ENCODE measurements at regions of chr12 and their contacts with region 1.

Region 1: DNA sequence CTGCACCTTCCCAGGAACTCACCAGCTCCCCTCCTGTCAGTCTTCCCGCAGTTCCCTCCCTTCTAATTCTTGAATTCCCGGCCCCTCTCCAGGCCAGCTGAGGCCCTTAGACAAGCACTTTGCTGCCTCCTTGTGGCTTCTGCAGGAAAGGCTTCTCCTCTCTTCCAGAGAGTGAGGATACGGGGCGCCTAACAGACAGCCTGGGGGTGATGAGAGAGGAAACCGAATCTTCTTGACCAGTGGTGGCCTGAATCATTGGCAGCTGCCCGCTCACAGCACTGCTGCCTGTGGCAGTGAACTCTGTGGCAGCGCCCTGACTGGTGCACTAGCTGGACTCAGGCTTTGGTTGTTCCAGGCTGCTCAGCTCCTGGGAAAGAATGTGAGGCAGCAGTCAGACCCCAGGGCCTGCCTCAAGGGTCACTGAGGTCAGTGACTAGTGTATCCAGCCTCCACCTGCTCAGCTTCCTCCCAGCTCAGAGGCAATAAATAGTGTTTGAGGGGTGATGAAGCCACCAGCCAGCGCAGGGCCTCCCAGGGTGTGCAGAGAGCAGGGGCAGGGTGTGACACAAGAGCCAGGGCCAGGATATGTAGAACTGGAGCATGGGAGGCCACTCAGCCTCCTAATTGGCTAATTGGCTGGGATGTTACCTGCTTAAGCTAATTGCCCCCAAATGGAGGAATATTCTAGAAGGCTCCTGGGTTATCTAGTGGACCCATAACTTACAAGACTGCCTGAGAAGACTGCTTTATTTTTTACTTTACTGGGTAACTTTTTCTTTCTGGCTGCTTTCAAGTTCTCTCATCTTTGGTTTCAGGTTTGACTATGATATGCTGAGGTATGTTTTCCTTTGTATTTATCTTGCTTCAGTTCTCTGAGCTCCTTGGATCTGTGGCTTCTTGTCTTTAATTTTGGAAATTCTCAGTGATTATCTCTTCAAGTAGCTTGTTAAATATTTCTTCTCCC is 12.9 kb upstream of the MCRS1 start:
- DNase-seq: peak; percentile 93
- H3K4me3 ChIP-seq: no peak overlapping the region
- H3K4me3 Mint-ChIP-seq: peak overlapping the region; percentile 19
- H3K27ac Mint-ChIP-seq: peak overlapping the region; percentile 21
- H3K4me1 ChIP-seq: peaks cover 30% of the 10 kb centered on the region
- H3K4me1 Mint-ChIP-seq: peaks cover 26% of the 10 kb centered on the region
- H3K27me3 ChIP-seq: no peaks in the 10 kb centered on the region
- H3K27me3 Mint-ChIP-seq: no peaks in the 10 kb centered on the region
- CTCF ChIP-seq: peak; percentile 90 to 97

Region 2: DNA sequence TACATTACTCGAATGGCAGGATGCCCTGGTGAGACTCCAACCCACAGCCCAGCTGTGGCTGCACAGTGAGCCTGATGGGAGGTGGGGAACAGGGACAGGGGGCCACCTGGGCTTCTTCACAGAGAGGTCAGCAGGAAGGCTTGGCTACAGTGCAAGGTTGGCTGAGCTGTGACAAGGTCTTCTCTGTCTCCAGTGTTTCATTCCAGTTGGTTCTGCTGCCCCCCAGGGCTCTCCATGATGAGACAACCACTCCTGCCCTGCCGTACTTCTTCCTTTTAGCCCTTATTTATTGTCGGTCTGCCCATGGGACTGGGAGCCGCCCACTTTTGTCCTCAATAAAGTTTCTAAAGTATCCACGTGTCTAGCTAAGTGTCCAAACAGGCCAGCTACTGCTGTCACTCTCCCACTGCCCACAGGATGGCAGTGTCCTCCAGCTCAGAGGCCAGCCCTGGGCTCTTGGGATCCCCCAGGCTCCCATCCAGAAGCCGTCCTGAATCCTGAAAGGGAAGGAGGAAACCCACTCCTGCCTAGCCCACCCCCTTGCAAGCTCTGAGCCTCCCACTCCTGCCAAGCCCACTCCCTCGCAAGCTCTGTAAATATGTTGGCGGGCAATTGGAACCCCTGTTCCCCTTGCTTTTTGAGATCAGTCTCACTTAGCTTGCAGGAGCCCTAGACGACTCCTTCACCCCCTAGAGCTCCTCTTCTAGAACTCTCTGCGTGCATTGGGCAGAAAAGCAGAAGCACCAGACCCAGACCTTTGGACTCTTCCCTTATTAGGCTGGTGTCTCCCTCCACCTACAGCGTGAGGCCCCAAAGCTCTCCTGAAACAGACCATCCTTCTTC is 249.3 kb before region 1 on chr12:
- CTCF ChIA-PET with region 1: interaction called, 20 read pairs
- POLR2A ChIA-PET with region 1: no interaction called
- intact Hi-C with region 1: no loop called
- DNase-seq: peak; percentile 84 to 86
- H3K4me3 ChIP-seq: no peak overlapping the region
- H3K4me3 Mint-ChIP-seq: peak overlapping the region; percentile 18
- H3K27ac Mint-ChIP-seq: peak overlapping the region; percentile 77
- H3K4me1 ChIP-seq: peaks cover 24% of the 10 kb centered on the region
- H3K4me1 Mint-ChIP-seq: peaks cover 24% of the 10 kb centered on the region
- H3K27me3 ChIP-seq: no peaks in the 10 kb centered on the region
- H3K27me3 Mint-ChIP-seq: no peaks in the 10 kb centered on the region
- CTCF ChIP-seq: peak; percentile 90 to 96

Region 3: DNA sequence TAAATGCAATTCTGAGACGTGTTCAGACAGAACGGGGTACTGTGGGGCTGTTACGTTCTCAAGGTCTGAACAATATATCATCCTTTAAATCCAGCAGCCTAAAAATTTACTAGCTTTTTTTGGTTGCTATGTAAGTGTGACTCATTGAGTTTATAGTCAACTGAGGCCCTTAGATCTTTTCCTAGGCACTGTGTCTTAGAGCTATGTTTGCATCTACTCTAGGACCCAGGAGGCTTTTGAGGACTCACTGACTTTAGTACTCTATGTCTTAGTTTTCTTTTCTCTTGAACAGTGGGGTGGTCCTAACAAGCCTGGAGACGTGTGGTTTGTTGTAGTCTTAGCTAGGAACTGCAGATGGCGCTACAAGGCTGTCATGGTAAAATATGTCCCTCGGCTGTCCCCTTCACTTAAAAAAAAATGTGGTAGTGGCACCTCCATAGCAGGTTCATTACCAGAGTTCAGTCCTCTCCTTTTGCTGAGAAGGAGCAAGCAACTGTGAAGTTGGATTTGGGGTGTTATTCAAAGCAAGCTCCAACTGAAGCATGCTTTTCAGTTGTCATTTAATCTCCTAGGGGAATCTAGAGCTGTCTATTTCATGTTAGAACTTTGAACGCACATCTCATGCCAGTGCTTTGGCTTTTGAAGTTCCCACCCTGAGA is 222.2 kb before region 1 on chr12:
- CTCF ChIA-PET with region 1: interaction called, 39 read pairs
- POLR2A ChIA-PET with region 1: no interaction called
- intact Hi-C with region 1: loop called (anchors 1 kb)
- DNase-seq: peak; percentile 77 to 80
- H3K4me3 ChIP-seq: no peak overlapping the region
- H3K4me3 Mint-ChIP-seq: no peak overlapping the region
- H3K27ac Mint-ChIP-seq: no peak overlapping the region
- H3K4me1 ChIP-seq: no peaks in the 10 kb centered on the region
- H3K4me1 Mint-ChIP-seq: peaks cover 9% of the 10 kb centered on the region
- H3K27me3 ChIP-seq: no peaks in the 10 kb centered on the region
- H3K27me3 Mint-ChIP-seq: no peaks in the 10 kb centered on the region
- CTCF ChIP-seq: peak; percentile 87 to 91

Region 4: DNA sequence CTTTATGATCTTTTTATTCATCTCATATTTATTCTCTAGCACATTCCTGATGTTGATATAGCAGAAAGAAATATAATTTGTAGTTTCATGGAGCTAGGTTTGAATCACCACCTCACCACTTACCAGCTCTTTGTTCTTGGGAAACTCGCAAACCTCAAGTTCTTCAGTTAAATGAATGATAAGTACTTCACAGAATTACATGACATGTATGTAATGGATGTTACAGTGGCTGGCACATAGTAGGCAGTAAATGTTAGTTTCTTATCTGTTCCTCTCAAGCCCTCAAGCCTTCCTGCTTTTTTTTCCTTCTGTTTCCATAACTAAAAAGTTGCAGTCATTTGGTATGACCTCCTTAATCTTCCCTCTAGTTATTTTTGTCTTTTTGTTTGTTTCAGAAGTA is 158.7 kb before region 1 on chr12:
- CTCF ChIA-PET with region 1: interaction called, 10 read pairs
- POLR2A ChIA-PET with region 1: no interaction called
- intact Hi-C with region 1: no loop called
- DNase-seq: no peak
- H3K4me3 ChIP-seq: no peak overlapping the region
- H3K4me3 Mint-ChIP-seq: no peak overlapping the region
- H3K27ac Mint-ChIP-seq: peak overlapping the region; percentile 40
- H3K4me1 ChIP-seq: peaks cover 49% of the 10 kb centered on the region
- H3K4me1 Mint-ChIP-seq: peaks cover 36% of the 10 kb centered on the region
- H3K27me3 ChIP-seq: no peaks in the 10 kb centered on the region
- H3K27me3 Mint-ChIP-seq: no peaks in the 10 kb centered on the region
- CTCF ChIP-seq: no peak

Region 5: DNA sequence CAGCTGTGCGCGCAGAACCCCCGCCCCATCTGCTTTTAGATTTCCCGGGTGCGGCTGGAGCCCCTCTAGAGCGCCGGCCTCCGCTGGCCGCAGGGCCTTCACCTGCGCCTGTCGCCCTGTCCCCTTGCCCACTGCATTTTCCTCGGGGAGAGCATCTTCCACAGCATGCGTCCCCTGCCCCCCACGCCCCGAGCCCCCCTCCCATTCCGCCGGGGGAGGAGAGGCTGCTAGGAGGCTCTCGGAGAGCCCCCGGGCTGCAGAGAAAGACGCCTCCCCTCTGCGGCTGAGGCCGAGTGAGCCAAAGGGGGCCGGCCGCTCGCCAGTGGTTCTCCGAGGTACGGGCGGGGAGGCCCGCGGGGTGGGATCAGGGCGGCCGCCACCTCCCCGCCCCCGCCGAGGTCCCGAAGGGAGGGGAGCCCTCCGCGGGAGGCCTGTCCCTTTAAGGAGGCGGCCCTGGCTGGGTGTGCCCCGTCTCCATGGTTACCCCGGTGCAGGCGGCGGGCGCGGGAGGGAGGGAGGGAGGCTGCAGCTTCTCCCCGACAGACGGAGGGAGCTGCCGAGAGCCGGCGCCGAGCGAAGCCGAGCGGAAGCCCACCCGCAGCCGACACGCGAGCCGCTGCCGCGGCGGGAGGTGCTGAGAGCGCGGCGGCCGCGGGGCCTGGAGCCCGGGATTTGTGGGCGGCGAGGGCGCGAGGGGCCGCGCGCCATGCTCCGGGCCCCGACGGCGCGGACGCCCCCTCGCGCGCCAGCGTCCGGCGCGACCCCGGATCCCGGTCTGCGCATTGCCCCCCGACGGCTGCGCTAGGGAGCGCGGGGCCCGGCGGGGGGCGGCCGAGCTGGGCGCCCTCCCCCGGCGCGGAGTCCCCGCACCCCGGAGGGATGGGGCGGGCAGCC is 42.1 kb before region 1 on chr12 and contains the start of gene KCNH3:
- CTCF ChIA-PET with region 1: interaction called, 5 read pairs
- POLR2A ChIA-PET with region 1: interaction called, 12 read pairs
- intact Hi-C with region 1: no loop called
- DNase-seq: peak; percentile 86
- H3K4me3 ChIP-seq: peak within 1 kb of the TSS; percentile 56
- H3K4me3 Mint-ChIP-seq: peak within 1 kb of the TSS; percentile 77
- H3K27ac Mint-ChIP-seq: no peak within 1 kb of the TSS
- H3K4me1 ChIP-seq: peaks cover 10% of the 10 kb centered on the region
- H3K4me1 Mint-ChIP-seq: no peaks in the 10 kb centered on the region
- H3K27me3 ChIP-seq: peaks cover 4% of the 10 kb centered on the region; the same call in 1 of the 2 replicates
- H3K27me3 Mint-ChIP-seq: peaks cover 10% of the 10 kb centered on the region
- CTCF ChIP-seq: no peak
- total RNA-seq, gene KCNH3: 0.16 and 0.27 TPM in 2 replicates

Region 6: DNA sequence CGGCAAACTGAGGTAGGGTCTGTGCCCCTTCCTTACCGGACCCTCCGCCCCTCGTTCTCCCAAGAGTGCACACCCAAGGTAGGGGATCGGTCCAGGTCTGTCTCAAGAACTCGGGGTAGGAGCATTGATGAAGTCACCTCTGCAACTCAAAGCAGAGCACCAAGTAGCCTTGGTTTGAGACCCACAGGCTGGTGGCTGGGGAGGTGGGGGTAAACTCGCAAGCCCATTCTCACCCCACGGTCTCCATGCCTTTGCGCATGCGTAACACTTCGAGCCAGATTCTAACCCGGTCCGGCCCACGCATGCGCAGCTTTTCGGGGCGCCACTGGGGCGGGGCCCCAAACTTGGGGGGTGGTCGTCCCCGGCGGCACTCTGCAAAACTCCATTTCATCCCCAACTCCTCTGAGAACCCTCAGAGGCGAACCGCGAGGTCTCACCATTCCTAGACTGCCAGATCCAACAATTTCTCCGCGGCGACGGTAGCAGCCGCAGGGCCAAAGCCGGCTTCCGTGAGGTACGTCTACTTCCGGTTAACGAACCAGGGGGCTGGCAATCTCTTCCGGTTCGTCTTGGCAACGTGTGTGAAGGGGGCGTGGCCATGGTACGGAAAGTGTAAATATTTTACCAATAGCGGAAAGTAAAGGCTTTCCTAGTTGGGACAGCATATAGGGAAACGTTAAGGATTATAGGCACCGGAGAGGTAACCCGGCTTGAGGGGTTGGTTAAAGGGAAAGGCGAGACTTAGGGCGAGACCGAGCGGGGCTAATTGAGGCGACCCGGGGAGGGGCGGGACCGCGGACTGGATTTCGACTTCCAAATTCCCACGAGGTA is 13.0 kb before region 1 on chr12 and contains the start of gene MCRS1:
- CTCF ChIA-PET with region 1: interaction called, 38 read pairs
- POLR2A ChIA-PET with region 1: interaction called, 4 read pairs
- intact Hi-C with region 1: no loop called
- DNase-seq: peak; percentile 91 to 94
- H3K4me3 ChIP-seq: peak within 1 kb of the TSS; percentile 63
- H3K4me3 Mint-ChIP-seq: peak within 1 kb of the TSS; percentile 99
- H3K27ac Mint-ChIP-seq: peak within 1 kb of the TSS; percentile 99
- H3K4me1 ChIP-seq: no peaks in the 10 kb centered on the region
- H3K4me1 Mint-ChIP-seq: peaks cover 9% of the 10 kb centered on the region
- H3K27me3 ChIP-seq: no peaks in the 10 kb centered on the region
- H3K27me3 Mint-ChIP-seq: no peaks in the 10 kb centered on the region
- CTCF ChIP-seq: no peak
- total RNA-seq, gene MCRS1: 115 and 122 TPM in 2 replicates

Region 7: DNA sequence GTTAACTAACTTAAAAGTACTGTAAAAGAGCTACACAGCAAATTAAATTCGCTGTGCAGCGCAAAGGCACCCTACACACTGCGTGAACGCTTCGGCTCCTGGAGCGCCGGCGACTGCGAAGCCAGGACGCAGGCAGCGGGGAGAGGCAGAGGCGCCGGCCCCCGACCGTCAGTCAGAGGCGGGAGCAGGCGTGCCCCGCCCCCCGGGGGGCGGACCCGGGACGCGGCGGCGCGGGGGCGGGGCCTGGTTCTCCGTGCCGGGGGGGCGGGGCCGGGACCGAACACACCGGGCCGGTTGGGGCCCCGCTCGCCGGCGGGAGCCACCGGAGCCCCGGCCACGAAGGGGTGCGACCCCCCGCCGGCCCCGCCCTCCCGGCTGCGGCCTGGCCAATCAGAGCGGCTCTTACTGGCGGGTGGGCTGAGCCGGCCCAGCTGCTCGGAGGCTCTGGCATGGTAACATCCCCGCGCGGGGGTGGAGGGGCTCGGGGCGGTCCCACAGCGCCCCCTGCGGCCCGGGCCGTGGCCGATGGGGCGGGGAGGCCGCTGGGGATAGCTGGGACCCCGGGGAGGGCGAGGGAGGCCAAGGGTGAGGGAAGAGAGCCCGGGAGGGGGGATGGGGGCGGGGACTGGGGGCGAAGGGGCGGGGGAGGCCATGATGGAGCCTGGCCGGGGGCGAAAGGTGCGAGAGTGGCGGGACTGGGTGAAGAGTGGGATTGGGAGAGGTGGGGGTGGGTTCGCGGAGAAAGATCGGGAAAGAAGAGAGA is 42.5 kb after region 1 on chr12 and contains the start of gene PRPF40B:
- CTCF ChIA-PET with region 1: interaction called, 35 read pairs
- POLR2A ChIA-PET with region 1: interaction called, 7 read pairs
- intact Hi-C with region 1: loop called (anchors 1 kb)
- DNase-seq: peak; percentile 95 to 99
- H3K4me3 ChIP-seq: peak within 1 kb of the TSS; percentile 66
- H3K4me3 Mint-ChIP-seq: peak within 1 kb of the TSS; percentile 82
- H3K27ac Mint-ChIP-seq: peak within 1 kb of the TSS; percentile 77
- H3K4me1 ChIP-seq: peaks cover 32% of the 10 kb centered on the region
- H3K4me1 Mint-ChIP-seq: peaks cover 29% of the 10 kb centered on the region
- H3K27me3 ChIP-seq: no peaks in the 10 kb centered on the region
- H3K27me3 Mint-ChIP-seq: no peaks in the 10 kb centered on the region
- CTCF ChIP-seq: peak; percentile 61 to 71
- total RNA-seq, gene PRPF40B: 33.3 and 33.4 TPM in 2 replicates